Posterior cingulate gyrus (tissue), 11 donors: ENCODE measurements at regions of chr3 and their contacts with region 1.

Region 1: DNA sequence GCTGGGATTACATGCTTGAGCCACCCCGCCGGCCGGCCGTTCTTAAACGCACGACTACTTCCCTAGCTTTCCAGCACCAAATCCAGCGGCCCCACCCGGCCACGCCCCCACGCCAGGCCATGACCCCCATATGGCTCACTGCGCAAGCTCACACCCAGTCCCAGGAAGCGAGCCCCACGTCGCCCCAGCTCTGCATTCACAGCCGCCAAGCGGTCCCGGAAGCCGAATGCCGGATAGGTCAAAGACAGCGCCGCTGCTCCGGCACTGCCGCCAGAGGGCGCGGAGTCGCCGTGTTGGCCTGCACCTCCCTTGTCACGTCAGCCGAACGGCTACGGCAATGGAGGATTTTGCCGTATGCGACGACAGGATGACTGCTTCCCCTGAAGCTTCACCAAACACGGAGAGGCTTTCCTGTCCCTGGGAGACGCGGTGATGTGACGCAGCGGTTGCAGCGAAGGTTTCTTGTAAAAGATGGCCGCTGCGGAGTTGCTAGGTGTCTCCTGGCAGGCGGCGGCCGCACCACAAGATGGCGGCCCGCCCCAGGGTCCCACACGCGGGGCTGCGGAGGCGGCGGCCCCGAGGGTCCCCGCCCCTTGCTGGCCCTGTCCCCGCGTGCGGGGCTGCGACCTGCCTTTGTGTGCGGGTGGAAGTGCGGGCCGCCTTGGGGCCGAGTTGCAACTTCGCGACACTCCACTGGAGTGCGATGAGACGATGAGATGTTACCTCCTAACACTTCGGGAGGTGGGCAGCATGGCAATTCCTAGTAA is 30.2 kb upstream of the RPN1 start:
- DNase-seq: peak; percentile 97 to 100 (median 98)

Region 2: GRCh38 chr3:128650096-128651050 is 30.4 kb before region 1 on chr3 and contains the start of gene RPN1:
- intact Hi-C with region 1: loop called (anchors 2 kb)
- DNase-seq: peak; percentile 91 to 99 (median 95)

Region 3: DNA sequence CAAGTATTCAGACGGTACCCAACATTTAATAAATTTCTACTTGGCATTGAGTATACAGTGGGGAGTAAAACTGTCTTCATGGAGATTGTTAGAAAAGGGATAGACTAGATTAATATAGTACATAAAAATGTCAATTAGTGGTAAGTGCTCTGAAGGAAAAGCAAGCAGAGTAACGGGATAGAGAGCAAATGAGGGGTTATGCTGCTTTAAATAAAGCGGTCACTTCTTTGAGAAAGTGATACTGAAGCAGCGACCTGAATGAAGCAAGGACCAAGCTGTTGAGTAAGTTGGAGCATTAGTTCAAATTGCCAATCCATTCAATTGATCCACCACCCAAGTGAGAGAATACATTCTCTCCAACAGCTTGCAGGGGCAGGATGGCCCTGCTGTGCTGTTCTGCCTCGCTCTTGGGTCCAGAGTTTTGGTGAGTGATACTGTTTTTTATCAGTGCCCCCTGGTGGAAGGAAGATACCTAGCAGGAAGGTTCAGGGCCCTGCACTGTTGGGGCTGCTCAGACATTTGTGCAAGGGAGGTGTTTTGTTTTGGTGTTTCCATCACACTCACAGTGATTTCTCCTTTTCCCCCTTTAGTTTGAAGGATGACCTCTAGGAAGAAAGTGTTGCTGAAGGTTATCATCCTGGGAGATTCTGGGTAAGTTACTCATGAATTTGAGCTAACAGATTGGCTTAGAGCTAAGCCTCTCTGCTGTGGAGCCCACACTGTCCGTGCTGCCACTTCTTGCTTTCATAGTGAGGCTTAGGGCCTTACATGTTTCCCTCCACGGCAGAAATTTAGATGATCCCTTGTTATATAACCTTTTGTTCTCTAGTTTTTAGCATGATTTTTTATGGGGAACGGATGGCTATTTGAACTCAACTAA is 114.2 kb after region 1 on chr3:
- intact Hi-C with region 1: loop called (anchors 5 kb)
- DNase-seq: peak in 4 of 10 donors; percentile 15 to 90 (median 40)

Region 4: GRCh38 chr3:128863560-128863959 is 182.8 kb after region 1 on chr3:
- intact Hi-C with region 1: loop called (anchors 5 kb)
- DNase-seq: peak in 3 of 10 donors; percentile 12 to 64 (median 64)

Region 5: GRCh38 chr3:129139911-129140310 is 459.1 kb after region 1 on chr3:
- intact Hi-C with region 1: no loop called
- DNase-seq: peak in 1 of 10 donors; percentile 4